CD8-positive, alpha-beta T cell (primary cell): ENCODE measurements at regions of chr2 and their contacts with region 1.

Region 1: GRCh38 chr2:165953655-165954606 is at the start of gene TTC21B:
- DNase-seq: peak; percentile 86 to 95 (median 93)
- ATAC-seq: peak; percentile 97
- H3K4me3 ChIP-seq: peak within 1 kb of the TSS; percentile 68 to 82
- H3K4me3 Mint-ChIP-seq: peak within 1 kb of the TSS; percentile 35
- H3K27ac ChIP-seq: peak within 1 kb of the TSS; percentile 72 to 77
- H3K27ac Mint-ChIP-seq: peak within 1 kb of the TSS; percentile 39
- H3K4me1 ChIP-seq: peaks cover 25% of the 10 kb centered on the region
- H3K4me1 Mint-ChIP-seq: peaks cover 27% of the 10 kb centered on the region
- H3K27me3 ChIP-seq: no peaks in the 10 kb centered on the region
- H3K27me3 Mint-ChIP-seq: no peaks in the 10 kb centered on the region
- CTCF ChIP-seq: peak; percentile 76
- total RNA-seq, gene TTC21B: 17.9 to 24.2 TPM

Region 2: GRCh38 chr2:165293440-165294353 is 660.2 kb before region 1 on chr2:
- CTCF ChIA-PET with region 1: no interaction called
- POLR2A ChIA-PET with region 1: no interaction called
- intact Hi-C with region 1: loop called (anchors 2 to 5 kb)
- DNase-seq: peak in 6 of 9 experiments; percentile 11 to 91 (median 40)
- ATAC-seq: peak; percentile 100
- H3K4me3 ChIP-seq: no peak overlapping the region
- H3K4me3 Mint-ChIP-seq: no peak overlapping the region
- H3K27ac ChIP-seq: no peak overlapping the region
- H3K27ac Mint-ChIP-seq: no peak overlapping the region
- H3K4me1 ChIP-seq: no peaks in the 10 kb centered on the region
- H3K4me1 Mint-ChIP-seq: peaks cover 5% of the 10 kb centered on the region
- H3K27me3 ChIP-seq: no peaks in the 10 kb centered on the region
- H3K27me3 Mint-ChIP-seq: peaks cover 4% of the 10 kb centered on the region
- CTCF ChIP-seq: peak; percentile 73

Region 3: DNA sequence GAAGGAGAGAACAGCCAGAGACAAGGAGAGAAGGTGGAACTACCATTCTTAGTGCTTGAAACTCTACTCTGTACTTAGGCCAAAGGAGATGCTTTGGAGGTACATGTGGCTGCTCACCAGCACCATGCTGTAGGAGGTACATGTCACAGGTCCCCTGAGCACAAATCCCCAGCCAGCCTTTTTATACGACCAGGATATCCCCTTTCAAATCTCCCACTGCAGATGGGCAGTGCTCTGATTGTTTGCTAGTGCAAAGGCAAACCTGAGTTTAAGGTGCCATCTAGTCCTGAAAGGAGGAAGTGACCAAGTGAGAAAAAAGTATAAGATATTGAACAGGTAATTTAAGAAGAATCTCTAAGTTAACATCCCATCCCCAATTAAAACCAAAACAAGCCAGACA is 16.7 kb after region 1 on chr2:
- CTCF ChIA-PET with region 1: interaction called, 3 read pairs
- POLR2A ChIA-PET with region 1: no interaction called
- intact Hi-C with region 1: loop called in 1 of 2 experiments (anchors 1 kb)
- DNase-seq: no peak
- ATAC-seq: no peak
- H3K4me3 ChIP-seq: no peak overlapping the region
- H3K4me3 Mint-ChIP-seq: no peak overlapping the region
- H3K27ac ChIP-seq: no peak overlapping the region
- H3K27ac Mint-ChIP-seq: no peak overlapping the region
- H3K4me1 ChIP-seq: no peaks in the 10 kb centered on the region
- H3K4me1 Mint-ChIP-seq: no peaks in the 10 kb centered on the region
- H3K27me3 ChIP-seq: peaks cover 0 to 2% of the 10 kb centered on the region in 2 experiments
- H3K27me3 Mint-ChIP-seq: peaks cover 29% of the 10 kb centered on the region
- CTCF ChIP-seq: no peak

Region 4: DNA sequence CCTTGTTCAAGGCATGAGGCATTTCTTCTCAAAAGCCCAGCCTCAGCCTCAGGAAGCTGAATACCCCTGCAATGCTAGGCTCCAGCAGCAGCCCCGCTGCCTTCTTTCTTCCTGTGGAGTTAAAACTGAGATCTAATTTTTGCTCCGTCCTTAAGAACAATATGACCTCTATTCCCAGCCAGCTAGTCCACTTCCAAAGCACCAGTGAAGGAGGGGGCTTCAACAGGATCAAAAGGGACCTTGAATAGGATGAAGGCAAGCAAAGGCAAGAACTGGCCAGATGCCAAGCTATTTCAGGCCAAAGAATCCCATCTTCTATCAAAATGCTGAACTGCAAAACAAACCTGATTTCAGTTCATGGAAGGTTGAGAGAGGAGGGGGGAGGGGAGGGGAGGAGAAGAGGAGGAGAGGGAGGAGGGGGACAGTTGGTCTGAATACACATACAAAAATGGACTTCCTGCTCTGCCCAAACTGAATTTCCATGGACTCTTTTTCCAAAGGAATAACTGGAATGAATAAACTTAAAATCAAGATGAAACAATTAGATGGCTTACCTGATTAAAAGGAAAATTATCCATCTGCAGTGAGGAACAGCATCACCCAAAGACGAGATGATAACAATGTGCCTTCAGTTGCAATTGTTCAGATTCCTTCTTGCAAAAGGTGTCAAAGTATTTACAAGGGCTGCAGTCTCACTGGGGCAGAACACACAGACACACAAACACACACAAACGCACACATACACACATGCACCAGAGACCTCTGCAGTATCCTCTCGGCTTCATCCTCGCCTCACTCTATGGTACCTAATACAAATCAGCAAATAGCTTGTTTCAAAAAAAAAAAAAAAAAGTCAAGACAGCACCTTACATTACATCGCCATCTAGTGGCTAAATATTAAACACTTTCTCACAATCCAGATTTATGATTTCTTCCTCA is 173.6 kb after region 1 on chr2 and contains the start of gene SCN1A:
- CTCF ChIA-PET with region 1: interaction called, 13 read pairs
- POLR2A ChIA-PET with region 1: no interaction called
- intact Hi-C with region 1: loop called (anchors 1 to 2 kb)
- DNase-seq: peak in 2 of 9 experiments; percentile 29 to 51
- ATAC-seq: no peak
- H3K4me3 ChIP-seq: no peak within 1 kb of the TSS
- H3K4me3 Mint-ChIP-seq: no peak within 1 kb of the TSS
- H3K27ac ChIP-seq: no peak within 1 kb of the TSS
- H3K27ac Mint-ChIP-seq: no peak within 1 kb of the TSS
- H3K4me1 ChIP-seq: no peaks in the 10 kb centered on the region
- H3K4me1 Mint-ChIP-seq: peaks cover 4% of the 10 kb centered on the region
- H3K27me3 ChIP-seq: peaks cover 0 to 3% of the 10 kb centered on the region in 2 experiments
- H3K27me3 Mint-ChIP-seq: peaks cover 19% of the 10 kb centered on the region
- CTCF ChIP-seq: peak; percentile 77
- total RNA-seq, gene SCN1A: not detected

Region 5: GRCh38 chr2:166545473-166545872 is 591.5 kb after region 1 on chr2:
- CTCF ChIA-PET with region 1: no interaction called
- POLR2A ChIA-PET with region 1: no interaction called
- intact Hi-C with region 1: no loop called
- DNase-seq: no peak
- ATAC-seq: no peak
- H3K4me3 ChIP-seq: no peak overlapping the region
- H3K4me3 Mint-ChIP-seq: no peak overlapping the region
- H3K27ac ChIP-seq: no peak overlapping the region
- H3K27ac Mint-ChIP-seq: no peak overlapping the region
- H3K4me1 ChIP-seq: no peaks in the 10 kb centered on the region
- H3K4me1 Mint-ChIP-seq: no peaks in the 10 kb centered on the region
- H3K27me3 ChIP-seq: no peaks in the 10 kb centered on the region
- H3K27me3 Mint-ChIP-seq: no peaks in the 10 kb centered on the region
- CTCF ChIP-seq: no peak